Activated CD4-positive, alpha-beta T cell treated with anti-CD3 and anti-CD28 coated beads for 36 hours (primary cell): ENCODE measurements at regions of chr10 and their contacts with region 1.

Region 1: GRCh38 chr10:100373298-100374136 is 26.5 kb downstream of the SCD start:
- DNase-seq: peak; percentile 99
- ATAC-seq: peak; percentile 83
- H3K4me3 Mint-ChIP-seq: no peak overlapping the region
- H3K27ac Mint-ChIP-seq: no peak overlapping the region
- H3K4me1 Mint-ChIP-seq: peaks cover 40% of the 10 kb centered on the region
- H3K27me3 Mint-ChIP-seq: no peaks in the 10 kb centered on the region

Region 2: DNA sequence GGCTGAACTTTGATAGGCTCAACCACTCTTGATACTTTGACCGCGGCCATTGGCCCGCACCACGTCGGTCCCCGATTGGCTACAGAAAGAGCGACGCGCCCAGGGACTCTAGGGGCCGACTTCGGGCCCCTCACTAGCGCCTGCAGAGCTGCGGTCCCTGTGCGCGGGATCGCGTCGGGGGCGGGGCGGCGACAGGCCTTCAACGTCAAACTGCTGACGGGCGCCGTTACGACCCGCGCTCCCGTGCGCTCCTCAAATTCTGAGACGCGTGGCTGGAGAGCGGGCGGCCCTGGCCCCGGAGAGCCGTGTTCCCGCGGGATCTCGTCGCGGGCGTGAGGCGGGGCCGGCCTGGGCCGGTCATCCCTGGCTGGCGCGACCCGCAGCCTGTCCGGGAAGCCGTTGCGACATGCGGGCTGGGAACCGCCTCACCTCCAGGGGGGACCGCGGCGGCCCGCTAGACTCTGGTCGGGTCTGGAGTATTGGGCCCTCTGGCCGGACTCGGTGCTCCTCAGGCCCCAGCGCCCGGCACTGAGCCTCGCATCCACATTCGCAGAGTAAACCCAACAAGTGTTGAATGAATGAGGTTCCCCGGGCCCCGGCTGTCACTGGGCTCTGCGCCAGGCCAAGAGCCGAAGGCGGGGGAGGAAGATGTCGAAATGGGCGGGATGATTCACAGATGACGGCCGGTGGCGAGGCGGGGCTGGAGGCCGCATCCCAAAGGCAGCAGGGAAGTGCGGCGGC is 752.6 kb before region 1 on chr10:
- CTCF ChIA-PET with region 1: no interaction called
- POLR2A ChIA-PET with region 1: no interaction called
- intact Hi-C with region 1: loop called in 1 of 2 experiments (anchors 2 kb)
- DNase-seq: peak; percentile 94
- ATAC-seq: peak; percentile 89
- H3K4me3 Mint-ChIP-seq: peak overlapping the region; percentile 96
- H3K27ac Mint-ChIP-seq: peak overlapping the region; percentile 96
- H3K4me1 Mint-ChIP-seq: peaks cover 39% of the 10 kb centered on the region
- H3K27me3 Mint-ChIP-seq: no peaks in the 10 kb centered on the region

Region 3: GRCh38 chr10:100185364-100186252 is 187.9 kb before region 1 on chr10 and contains the start of gene ERLIN1:
- CTCF ChIA-PET with region 1: no interaction called
- POLR2A ChIA-PET with region 1: interaction called, 3 read pairs
- intact Hi-C with region 1: loop called in 1 of 2 experiments (anchors 2 kb)
- DNase-seq: peak; percentile 97
- ATAC-seq: peak; percentile 90
- H3K4me3 Mint-ChIP-seq: peak within 1 kb of the TSS; percentile 97
- H3K27ac Mint-ChIP-seq: peak within 1 kb of the TSS; percentile 97
- H3K4me1 Mint-ChIP-seq: peaks cover 48% of the 10 kb centered on the region
- H3K27me3 Mint-ChIP-seq: no peaks in the 10 kb centered on the region
- total RNA-seq, gene ERLIN1: 15.2 to 18.7 TPM

Region 4: DNA sequence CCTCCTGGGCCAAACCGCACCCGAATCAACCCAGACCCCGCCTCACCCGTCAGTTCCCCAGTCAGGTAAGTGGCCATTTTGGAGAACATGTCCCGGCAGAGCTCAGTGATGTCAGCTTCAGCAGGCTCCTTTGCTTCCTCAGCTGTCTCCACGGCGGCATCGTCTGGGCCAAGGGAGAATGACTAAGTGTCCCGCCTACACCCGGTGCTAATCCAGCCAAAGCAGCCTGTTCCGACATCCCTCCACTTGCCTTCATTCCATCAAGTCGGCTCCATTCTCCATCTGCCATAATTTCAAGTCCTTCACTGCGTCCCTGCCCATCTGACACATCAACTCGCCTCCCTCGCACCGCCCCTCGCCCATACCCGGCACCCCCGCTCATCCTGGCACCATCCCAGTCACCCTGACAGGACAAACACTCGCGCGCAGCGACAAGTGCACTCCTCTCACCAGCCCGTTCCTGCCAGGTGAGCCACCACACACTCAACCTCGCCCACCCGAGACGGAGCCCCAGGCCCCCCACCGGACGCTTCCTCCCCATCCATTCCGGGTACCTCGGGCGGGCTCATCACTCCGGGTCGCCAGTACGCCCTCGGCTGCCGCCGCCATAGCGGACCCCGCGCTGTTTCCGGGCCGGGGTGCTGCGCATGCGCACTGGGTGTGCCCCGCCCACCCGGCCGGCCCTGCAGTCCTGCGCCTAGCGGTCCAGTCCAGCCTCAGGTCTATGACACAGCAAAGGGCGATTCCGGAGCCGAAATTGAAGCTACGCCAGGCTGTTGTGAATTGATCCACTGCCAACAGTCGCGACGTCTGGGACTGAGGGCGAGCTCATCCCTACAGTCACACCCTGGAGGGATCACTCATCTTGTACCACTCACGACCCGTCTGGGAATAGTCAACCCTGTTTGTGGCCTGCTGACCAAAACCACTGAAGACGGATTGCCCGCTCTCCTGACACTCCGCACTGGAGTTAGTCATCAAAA is 87.2 kb before region 1 on chr10 and contains the start of gene BLOC1S2:
- CTCF ChIA-PET with region 1: no interaction called
- POLR2A ChIA-PET with region 1: no interaction called
- intact Hi-C with region 1: loop called in 1 of 2 experiments (anchors 1 kb)
- DNase-seq: peak; percentile 91
- ATAC-seq: peak; percentile 89
- H3K4me3 Mint-ChIP-seq: peak within 1 kb of the TSS; percentile 100
- H3K27ac Mint-ChIP-seq: peak within 1 kb of the TSS; percentile 100
- H3K4me1 Mint-ChIP-seq: peaks cover 24% of the 10 kb centered on the region
- H3K27me3 Mint-ChIP-seq: no peaks in the 10 kb centered on the region
- total RNA-seq, gene BLOC1S2: 45.0 to 45.7 TPM

Region 5: GRCh38 chr10:100508691-100509150 is 135.2 kb after region 1 on chr10:
- CTCF ChIA-PET with region 1: interaction called, 20 read pairs
- POLR2A ChIA-PET with region 1: interaction called, 5 read pairs
- intact Hi-C with region 1: loop called (anchors 1 to 2 kb)
- DNase-seq: peak; percentile 59
- ATAC-seq: peak; percentile 52
- H3K4me3 Mint-ChIP-seq: peak overlapping the region; percentile 35
- H3K27ac Mint-ChIP-seq: peak overlapping the region; percentile 86
- H3K4me1 Mint-ChIP-seq: peaks cover 69% of the 10 kb centered on the region
- H3K27me3 Mint-ChIP-seq: no peaks in the 10 kb centered on the region

Region 6: DNA sequence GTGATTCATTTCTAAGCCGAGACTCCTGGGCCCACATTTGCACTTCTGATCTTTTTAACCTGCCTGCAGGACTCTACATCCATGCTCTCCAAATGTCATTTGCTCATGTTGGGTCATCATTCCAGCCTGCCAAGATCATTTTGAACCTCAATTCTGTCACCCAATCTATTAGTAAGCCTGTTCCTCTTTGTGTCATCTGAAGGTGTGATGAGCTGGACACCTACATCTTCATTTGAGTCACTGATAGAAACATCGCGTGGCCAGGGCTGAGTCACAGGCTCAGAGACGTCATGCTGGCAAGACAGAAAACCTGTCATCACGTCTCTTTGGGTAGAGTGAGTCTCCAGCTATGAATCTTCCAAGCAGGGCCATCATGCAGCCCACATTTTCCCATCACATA is 473.9 kb after region 1 on chr10:
- CTCF ChIA-PET with region 1: no interaction called
- POLR2A ChIA-PET with region 1: no interaction called
- intact Hi-C with region 1: loop called in 1 of 2 experiments (anchors 1 kb)
- DNase-seq: peak; percentile 90
- ATAC-seq: peak; percentile 94
- H3K4me3 Mint-ChIP-seq: no peak overlapping the region
- H3K27ac Mint-ChIP-seq: peak overlapping the region; percentile 85
- H3K4me1 Mint-ChIP-seq: peaks cover 31% of the 10 kb centered on the region
- H3K27me3 Mint-ChIP-seq: peaks cover 46% of the 10 kb centered on the region

Region 7: DNA sequence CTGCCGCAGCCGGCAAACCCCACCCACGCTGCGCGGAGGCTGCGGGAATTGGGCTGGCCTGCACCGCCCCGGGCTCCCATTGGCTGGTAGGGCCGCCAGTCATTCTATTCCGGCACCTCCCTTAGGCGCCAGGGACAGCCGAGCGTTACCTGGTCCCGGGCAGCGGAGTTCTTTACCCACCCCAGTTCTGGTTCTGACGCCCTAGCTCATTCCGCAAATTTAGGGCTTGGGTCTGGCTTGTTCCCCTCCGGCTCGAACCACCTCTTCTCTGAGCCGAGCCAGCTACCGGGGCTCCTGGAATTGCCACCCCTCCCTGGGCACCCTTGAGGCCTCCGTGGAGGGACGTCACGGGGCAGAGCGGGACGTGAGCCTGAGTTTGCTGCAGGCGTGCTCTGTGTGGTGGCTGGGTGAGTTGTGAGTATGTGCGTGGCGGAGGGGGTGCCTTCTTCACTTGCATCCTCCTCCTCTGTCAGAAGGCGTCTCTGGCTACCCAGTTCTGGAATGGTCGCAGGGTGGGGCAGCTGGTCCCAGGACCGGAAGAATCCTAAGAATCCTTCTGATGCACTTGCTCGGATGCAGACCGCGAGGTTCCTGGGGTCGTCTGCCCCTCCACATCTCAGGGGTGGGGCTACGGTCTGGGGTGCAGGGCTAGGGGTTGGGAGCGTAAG is 657.7 kb after region 1 on chr10 and contains the starts of genes PDZD7 and SFXN3:
- CTCF ChIA-PET with region 1: no interaction called
- POLR2A ChIA-PET with region 1: no interaction called
- intact Hi-C with region 1: loop called in 1 of 2 experiments (anchors 5 kb)
- DNase-seq: peak; percentile 98
- ATAC-seq: peak; percentile 85
- H3K4me3 Mint-ChIP-seq: peak within 1 kb of the TSS; percentile 80
- H3K27ac Mint-ChIP-seq: peak within 1 kb of the TSS; percentile 82
- H3K4me1 Mint-ChIP-seq: peaks cover 22% of the 10 kb centered on the region
- H3K27me3 Mint-ChIP-seq: no peaks in the 10 kb centered on the region
- total RNA-seq, gene PDZD7: 0.28 to 0.32 TPM
- total RNA-seq, gene SFXN3: 30.0 to 37.7 TPM